Activated T-helper 1 cell treated with anti-CD3 and anti-CD28 coated beads, Interleukin-12 subunit alpha, Interleukin-12 subunit beta, Interleukin-2, Interleukin-4 antibody, amounts not matched to agents 30 ng/mL and 10 ng/mL and 1 ng/mL, durations not matched to agents 14 hours and 24 hours and 36 hours (primary cell): ENCODE measurements at regions of chr3 and their contacts with region 1.

Region 1: DNA sequence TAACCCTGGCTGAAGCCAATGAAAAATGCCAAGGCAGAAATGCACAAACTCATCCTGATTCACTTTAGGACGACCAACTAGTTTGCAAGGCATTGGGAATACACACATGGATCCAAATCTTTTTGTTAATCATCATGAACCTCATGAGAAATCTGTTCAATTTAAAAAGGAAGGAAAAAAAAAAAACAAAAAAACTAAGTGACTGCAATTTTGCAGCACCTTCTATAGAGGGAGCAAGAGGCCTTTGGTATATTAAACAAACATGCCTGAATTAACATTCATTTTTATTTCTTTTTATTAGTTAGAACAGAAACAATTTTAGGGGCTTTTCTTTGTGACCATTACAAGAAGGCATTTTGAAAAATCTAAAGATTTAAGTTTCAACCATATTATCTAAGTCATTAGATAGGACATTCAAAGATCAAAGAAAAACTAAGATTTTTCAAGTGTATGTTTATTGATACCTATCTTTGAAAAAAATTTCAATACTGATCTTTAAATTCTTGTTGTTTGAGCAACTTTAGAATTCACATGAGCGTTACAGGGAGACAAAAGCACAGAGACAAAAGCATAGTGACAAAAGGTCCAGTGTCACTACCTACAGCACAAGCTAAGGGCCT is 182.4 kb downstream of the CBLB start:
- DNase-seq: no peak
- H3K4me3 Mint-ChIP-seq: no peak overlapping the region
- H3K27ac Mint-ChIP-seq: peak overlapping the region; percentile 54
- H3K4me1 Mint-ChIP-seq: peaks cover 32% of the 10 kb centered on the region
- H3K27me3 Mint-ChIP-seq: no peaks in the 10 kb centered on the region

Region 2: DNA sequence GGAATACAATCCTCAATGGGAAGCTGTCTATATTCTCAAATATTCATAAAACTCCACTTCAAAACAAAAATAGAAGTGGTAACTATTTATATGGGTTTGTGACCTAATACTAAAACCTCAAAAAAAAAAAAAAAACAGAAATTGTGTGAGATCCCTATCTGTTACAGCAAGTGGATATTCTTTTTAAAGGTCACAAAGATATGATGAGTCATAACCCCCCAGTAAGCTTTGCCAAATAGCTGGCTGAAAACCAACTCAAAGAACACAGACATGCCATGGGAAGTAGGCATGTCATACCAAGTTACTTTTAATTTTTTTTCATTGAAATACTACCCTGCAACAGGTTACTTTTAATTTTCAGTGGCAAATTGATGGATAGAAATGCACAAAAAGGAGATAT is 120.0 kb after region 1 on chr3:
- intact Hi-C with region 1: loop called (anchors 1 kb)
- DNase-seq: no peak
- H3K4me3 Mint-ChIP-seq: peak overlapping the region; percentile 40
- H3K27ac Mint-ChIP-seq: peak overlapping the region; percentile 84
- H3K4me1 Mint-ChIP-seq: peaks cover 67% of the 10 kb centered on the region
- H3K27me3 Mint-ChIP-seq: no peaks in the 10 kb centered on the region

Region 3: GRCh38 chr3:105984837-105985236 is 298.4 kb after region 1 on chr3:
- intact Hi-C with region 1: no loop called
- DNase-seq: no peak
- H3K4me3 Mint-ChIP-seq: no peak overlapping the region
- H3K27ac Mint-ChIP-seq: no peak overlapping the region
- H3K4me1 Mint-ChIP-seq: peaks cover 29% of the 10 kb centered on the region
- H3K27me3 Mint-ChIP-seq: no peaks in the 10 kb centered on the region

Region 4: GRCh38 chr3:107064445-107065060 is 1378.2 kb after region 1 on chr3:
- intact Hi-C with region 1: loop called (anchors 10 kb)
- DNase-seq: peak; percentile 29
- H3K4me3 Mint-ChIP-seq: no peak overlapping the region
- H3K27ac Mint-ChIP-seq: no peak overlapping the region
- H3K4me1 Mint-ChIP-seq: peaks cover 24% of the 10 kb centered on the region
- H3K27me3 Mint-ChIP-seq: peaks cover 5% of the 10 kb centered on the region